AG04449 (cell line): ENCODE measurements at regions of chr1 and their contacts with region 1.

Region 1: GRCh38 chr1:185595835-185596667 is 138.1 kb upstream of the HMCN1 start:
- DNase-seq: no peak
- H3K4me3 ChIP-seq: no peak overlapping the region
- CTCF ChIP-seq: peak; percentile 61

Region 2: GRCh38 chr1:185291652-185292051 is 304.4 kb before region 1 on chr1:
- CTCF ChIA-PET with region 1: interaction called, 10 read pairs
- POLR2A ChIA-PET with region 1: no interaction called
- DNase-seq: no peak
- H3K4me3 ChIP-seq: no peak overlapping the region
- CTCF ChIP-seq: no peak

Region 3: GRCh38 chr1:185566995-185567394 is 29.1 kb before region 1 on chr1:
- CTCF ChIA-PET with region 1: interaction called, 16 read pairs
- POLR2A ChIA-PET with region 1: no interaction called
- DNase-seq: no peak
- H3K4me3 ChIP-seq: no peak overlapping the region
- CTCF ChIP-seq: no peak

Region 4: DNA sequence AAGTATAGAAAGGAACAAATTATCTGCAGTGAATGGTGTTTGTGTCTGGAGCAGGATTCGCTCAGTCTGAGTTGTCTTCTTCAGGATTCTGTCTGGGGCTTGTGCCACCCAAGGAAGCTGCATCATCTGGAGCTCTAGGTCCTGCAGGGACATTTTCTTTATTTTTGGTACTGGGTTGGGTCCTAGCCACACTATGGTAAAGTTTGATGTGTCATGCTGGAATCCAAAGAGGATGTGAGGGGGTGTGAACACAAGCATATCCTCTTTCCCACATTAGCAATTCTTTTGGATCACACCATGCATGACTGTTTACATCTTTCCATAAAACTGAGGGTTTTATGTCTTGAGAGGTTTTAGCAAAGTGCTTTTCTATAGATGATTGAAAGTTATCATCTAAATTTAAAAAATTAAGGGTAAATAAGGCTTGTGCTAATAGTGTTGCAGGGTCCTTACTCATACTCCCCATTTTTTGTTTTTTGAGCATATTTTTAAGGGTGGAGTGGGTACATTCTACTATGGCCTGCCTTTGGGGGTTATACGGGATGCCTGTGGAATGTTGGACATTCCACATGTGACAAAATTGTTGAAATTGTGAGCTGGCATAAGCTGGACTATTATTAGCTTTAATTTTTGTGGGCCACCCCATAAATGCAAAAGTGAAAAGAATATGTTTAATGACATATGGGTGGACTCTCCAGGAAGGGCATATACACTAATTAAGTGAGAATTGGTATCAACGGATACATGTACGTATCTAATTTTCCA is 13.9 kb before region 1 on chr1:
- CTCF ChIA-PET with region 1: interaction called, 25 read pairs
- POLR2A ChIA-PET with region 1: no interaction called
- DNase-seq: no peak
- H3K4me3 ChIP-seq: no peak overlapping the region
- CTCF ChIP-seq: no peak

Region 5: GRCh38 chr1:185627761-185628501 is 31.9 kb after region 1 on chr1:
- CTCF ChIA-PET with region 1: interaction called, 11 read pairs
- POLR2A ChIA-PET with region 1: no interaction called
- DNase-seq: no peak
- H3K4me3 ChIP-seq: no peak overlapping the region
- CTCF ChIP-seq: no peak